ENCODE measurements at regions of chr19 and their contacts with region 1.

Region 1: DNA sequence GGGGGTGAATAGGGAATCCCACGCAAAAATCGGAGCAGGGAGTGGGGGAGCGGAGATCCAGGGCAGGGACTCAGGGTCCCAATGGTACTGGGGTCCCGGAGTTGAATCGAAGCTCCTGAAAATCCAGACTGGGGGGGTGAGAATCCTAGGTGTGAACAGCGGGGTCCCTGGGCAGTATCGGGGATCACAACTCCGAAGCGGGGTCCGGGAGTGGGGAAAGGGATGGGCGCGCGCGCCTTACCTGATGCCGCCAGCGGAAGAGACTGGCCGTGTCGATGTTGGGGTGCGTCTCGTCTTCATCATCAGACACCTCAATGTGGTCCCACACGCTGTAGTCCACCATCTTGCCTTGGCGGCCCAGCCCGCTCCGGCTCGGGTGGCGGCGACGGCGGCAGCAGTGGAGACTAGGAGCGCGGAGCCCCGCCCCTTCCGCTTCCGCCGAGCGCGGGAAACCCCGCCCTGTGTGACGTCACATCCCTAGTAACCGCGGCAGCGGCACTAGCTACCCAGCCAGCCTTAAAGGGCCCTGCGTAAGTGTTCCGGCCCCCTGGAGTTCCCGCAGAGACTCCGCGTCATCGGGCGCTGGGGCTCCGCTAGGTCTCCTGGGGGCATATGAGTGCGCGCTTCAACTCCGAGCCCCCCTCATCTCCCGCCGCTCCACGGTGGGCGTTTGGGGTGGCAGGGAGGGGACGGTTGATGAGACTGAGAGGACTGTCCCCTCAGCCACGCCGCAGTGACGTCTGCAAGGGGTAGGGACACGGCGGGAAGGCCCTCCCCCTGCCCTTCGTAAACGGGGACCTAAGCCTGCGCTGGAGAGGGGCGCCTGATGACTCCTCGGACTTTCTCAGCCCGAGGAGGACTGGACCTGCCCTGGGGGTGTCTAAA is at the start of gene CDC37:
- DNase-seq: peak; percentile 99
- CTCF ChIP-seq: no peak

Region 2: DNA sequence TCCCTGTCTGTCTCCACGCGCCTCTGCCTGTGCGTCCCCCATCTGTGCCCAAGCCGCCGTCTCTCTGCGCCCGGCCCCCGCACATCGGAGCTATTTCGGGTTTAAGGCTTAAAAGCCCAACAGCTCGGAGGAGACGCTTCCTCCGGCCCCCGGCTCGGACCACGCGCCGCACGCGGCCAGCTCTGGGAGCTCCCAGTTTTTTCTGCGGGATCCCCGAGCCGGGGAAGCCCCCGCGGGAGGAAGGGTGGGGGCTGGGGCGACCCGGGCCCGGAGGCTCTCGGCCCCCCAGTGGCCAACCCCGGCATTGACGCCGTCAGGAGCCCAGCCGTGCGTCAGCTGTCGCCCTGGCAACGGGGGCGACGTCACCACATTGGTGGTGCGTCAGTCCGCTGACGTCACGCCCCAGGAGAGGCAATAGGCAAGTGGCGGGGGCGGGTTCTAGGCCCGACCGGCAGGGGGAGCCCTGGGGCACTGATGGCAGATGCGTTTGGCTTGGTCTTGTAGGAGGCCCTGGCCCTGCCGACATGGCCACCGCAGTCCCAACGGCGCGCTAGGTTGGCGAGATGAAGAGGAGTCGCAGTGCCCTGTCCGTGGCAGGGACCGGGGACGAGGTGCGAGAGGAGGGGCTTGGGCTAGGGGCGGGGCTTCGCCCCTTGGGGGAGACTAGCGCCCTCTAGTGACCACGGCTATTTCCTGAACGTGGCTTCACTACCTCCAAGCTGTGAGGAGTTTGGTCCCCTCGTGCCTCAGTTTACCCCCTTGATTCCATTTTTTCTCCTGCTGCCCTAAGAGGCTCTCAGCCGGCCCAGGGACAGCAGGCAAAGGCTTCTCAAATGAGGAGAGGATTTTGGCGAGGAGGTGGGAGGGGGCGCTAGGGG is 13.2 kb after region 1 on chr19:
- CTCF ChIA-PET with region 1: interaction called, 979 read pairs
- POLR2A ChIA-PET with region 1: interaction called, 5 read pairs
- DNase-seq: peak; percentile 89
- CTCF ChIP-seq: peak; percentile 74